ENCODE measurements at regions of chr4 and their contacts with region 1.

Region 1: GRCh38 chr4:38034986-38035882 is 75.0 kb downstream of the PTTG2 start:
- DNase-seq: peak; percentile 44
- ATAC-seq: peak; percentile 66
- H3K4me3 Mint-ChIP-seq: no peak overlapping the region
- H3K27ac Mint-ChIP-seq: no peak overlapping the region
- H3K4me1 Mint-ChIP-seq: no peaks in the 10 kb centered on the region
- H3K27me3 Mint-ChIP-seq: no peaks in the 10 kb centered on the region
- CTCF ChIP-seq: peak; percentile 79

Region 2: DNA sequence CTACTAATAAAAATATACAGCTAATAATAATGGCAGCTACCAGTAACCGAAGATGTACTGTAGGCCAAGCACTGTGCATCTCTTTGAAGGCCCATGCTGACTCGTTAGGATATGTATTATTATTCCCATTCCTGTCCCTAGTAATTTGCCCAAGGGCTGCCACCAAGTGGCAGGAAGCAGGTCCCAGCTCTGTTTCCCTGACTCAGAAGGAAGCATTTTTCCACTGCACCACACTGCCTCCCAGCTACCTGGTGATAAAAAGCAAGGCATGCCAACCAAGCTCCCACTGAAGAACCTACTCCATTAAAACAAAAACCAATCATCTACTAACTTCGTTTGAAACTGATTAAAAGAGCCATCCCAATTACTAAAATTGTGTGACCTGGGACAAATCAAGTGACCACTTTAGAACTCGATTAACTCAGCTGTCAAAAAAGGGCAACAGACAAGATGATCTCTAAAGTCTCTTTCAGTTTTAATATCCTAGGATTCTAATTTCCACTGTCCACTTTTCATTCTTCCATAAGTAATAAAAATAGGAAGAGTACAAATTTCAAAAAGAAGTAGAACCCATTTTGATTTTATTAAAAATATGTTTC is 233.1 kb before region 1 on chr4:
- CTCF ChIA-PET with region 1: interaction called, 53 read pairs
- POLR2A ChIA-PET with region 1: no interaction called
- intact Hi-C with region 1: loop called (anchors 1 kb)
- DNase-seq: no peak
- ATAC-seq: no peak
- H3K4me3 Mint-ChIP-seq: no peak overlapping the region
- H3K27ac Mint-ChIP-seq: no peak overlapping the region
- H3K4me1 Mint-ChIP-seq: no peaks in the 10 kb centered on the region
- H3K27me3 Mint-ChIP-seq: no peaks in the 10 kb centered on the region
- CTCF ChIP-seq: no peak

Region 3: DNA sequence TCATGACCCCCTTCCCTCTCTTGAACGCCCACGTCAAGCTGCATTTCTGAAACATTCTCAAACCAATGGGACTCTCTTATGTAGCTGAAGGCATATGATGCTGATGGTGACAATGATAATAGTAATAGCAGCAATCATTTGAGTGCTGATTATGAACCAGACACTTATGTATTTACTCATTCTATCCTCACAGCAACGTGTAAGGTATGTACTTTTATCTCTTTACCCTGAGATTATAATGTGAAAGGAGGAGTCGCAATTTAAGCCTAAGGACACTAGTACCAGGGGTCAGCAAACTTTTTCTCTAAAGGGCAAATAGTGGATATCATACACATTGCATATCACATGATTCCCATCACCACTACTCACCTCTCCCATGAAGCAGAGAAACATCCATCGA is 200.2 kb before region 1 on chr4:
- CTCF ChIA-PET with region 1: interaction called, 10 read pairs
- POLR2A ChIA-PET with region 1: no interaction called
- intact Hi-C with region 1: no loop called
- DNase-seq: no peak
- ATAC-seq: no peak
- H3K4me3 Mint-ChIP-seq: no peak overlapping the region
- H3K27ac Mint-ChIP-seq: no peak overlapping the region
- H3K4me1 Mint-ChIP-seq: peaks cover 32% of the 10 kb centered on the region
- H3K27me3 Mint-ChIP-seq: no peaks in the 10 kb centered on the region
- CTCF ChIP-seq: no peak

Measured in activated CD8-positive, alpha-beta T cell treated with anti-CD3 and anti-CD28 coated beads for 36 hours (primary cell).